ENCODE measurements at regions of chr2 and their contacts with region 1.

Region 1: DNA sequence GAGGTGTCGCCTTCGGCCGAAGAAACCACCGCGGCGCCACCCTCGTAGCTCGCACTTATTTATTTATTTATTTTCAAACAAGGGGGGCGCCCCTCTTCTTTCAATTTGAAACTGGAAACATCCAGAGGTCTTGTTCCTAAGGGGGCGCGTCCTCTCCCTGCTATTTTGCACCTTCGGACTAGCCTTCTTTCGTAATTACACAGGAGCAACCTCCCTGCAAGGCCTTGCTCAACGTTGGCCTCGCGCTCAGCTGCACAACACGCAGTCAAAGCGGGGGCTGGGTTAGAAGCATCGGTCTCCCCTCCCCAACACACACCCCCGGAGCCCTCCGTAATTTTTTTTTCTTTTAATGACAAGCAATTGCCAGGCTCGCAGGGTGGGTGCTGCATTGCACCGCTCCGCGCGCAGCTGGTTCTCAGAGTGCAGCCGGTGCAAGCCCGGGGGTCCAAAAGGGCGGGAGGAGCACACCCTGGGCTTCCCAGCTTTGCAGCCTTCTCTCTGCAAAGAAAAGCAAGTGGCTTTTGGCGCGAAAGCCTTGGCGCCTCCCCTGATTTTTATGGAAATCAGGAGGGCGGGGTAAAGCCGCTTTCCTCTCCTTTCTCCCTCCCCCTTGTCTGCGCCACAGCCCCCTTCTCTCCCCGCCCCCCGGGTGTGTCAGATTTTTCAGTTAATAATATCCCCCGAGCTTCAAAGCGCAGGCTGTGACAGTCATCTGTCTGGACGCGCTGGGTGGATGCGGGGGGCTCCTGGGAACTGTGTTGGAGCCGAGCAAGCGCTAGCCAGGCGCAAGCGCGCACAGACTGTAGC is at the start of gene MYCN:
- DNase-seq: peak in 1 of 2 donors; percentile 58
- ATAC-seq: peak; percentile 27 to 62 (median 40)
- H3K4me3 ChIP-seq: peak within 1 kb of the TSS; percentile 63
- H3K27ac ChIP-seq: no peak within 1 kb of the TSS
- H3K4me1 ChIP-seq: peaks cover 29% of the 10 kb centered on the region
- H3K27me3 ChIP-seq: peaks cover 0 to 38% (median 11%) of the 10 kb centered on the region in 3 donors
- CTCF ChIP-seq: no peak
- total RNA-seq, gene MYCN: 0.25 to 0.36 (median 0.30) TPM

Region 2: GRCh38 chr2:16281451-16282336 is 341.6 kb after region 1 on chr2:
- intact Hi-C with region 1: loop called (anchors 1 to 5 kb)
- DNase-seq: no peak
- ATAC-seq: peak in 3 of 4 donors; percentile 57 to 74 (median 65)
- H3K4me3 ChIP-seq: no peak overlapping the region
- H3K27ac ChIP-seq: no peak overlapping the region
- H3K4me1 ChIP-seq: no peaks in the 10 kb centered on the region
- H3K27me3 ChIP-seq: no peaks in the 10 kb centered on the region
- CTCF ChIP-seq: peak; percentile 48

Region 3: DNA sequence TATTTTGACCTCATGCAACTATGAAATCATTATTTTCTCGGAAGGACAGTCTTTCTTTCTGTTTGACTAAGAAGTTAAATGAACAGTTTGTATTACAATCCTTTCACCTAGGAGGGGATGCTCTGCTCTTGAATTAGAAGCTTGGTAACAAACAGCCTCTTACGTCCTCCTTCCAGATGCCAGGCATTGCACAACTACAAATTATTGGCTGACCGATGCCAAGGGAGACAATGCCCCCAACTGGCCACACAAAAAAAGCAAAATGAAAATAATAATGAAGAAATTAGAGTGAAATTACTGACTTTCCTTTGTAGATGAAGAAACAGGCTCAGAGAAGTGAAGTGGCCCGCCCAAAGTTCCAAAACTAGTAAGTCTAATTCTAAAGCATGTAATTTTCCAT is 547.6 kb after region 1 on chr2:
- intact Hi-C with region 1: loop called in 1 of 2 experiments (anchors 5 kb)
- DNase-seq: no peak
- ATAC-seq: peak in 3 of 4 donors; percentile 48 to 73 (median 67)
- H3K4me3 ChIP-seq: no peak overlapping the region
- H3K27ac ChIP-seq: no peak overlapping the region
- H3K4me1 ChIP-seq: no peaks in the 10 kb centered on the region
- H3K27me3 ChIP-seq: no peaks in the 10 kb centered on the region
- CTCF ChIP-seq: peak; percentile 24

Region 4: GRCh38 chr2:16507655-16508489 is 567.8 kb after region 1 on chr2:
- intact Hi-C with region 1: loop called (anchors 5 kb)
- DNase-seq: peak; percentile 41 to 71
- ATAC-seq: peak; percentile 92 to 98 (median 96)
- H3K4me3 ChIP-seq: peak overlapping the region; percentile 65
- H3K27ac ChIP-seq: no peak overlapping the region
- H3K4me1 ChIP-seq: peaks cover 8% of the 10 kb centered on the region
- H3K27me3 ChIP-seq: peaks cover 0 to 34% (median 0%) of the 10 kb centered on the region in 3 donors
- CTCF ChIP-seq: peak; percentile 71

Region 5: GRCh38 chr2:16608661-16609643 is 668.9 kb after region 1 on chr2:
- intact Hi-C with region 1: loop called (anchors 2 to 10 kb)
- DNase-seq: peak; percentile 81 to 90
- ATAC-seq: peak; percentile 89 to 94 (median 92)
- H3K4me3 ChIP-seq: peak overlapping the region; percentile 44
- H3K27ac ChIP-seq: peak overlapping the region; percentile 1
- H3K4me1 ChIP-seq: peaks cover 6% of the 10 kb centered on the region
- H3K27me3 ChIP-seq: no peaks in the 10 kb centered on the region
- CTCF ChIP-seq: peak; percentile 99

Measured in psoas muscle (tissue), 8 donors.